ENCODE measurements at regions of chr1 and their contacts with region 1.

Region 1: GRCh38 chr1:7062346-7063061 is 277.2 kb downstream of the CAMTA1 start:
- DNase-seq: no peak
- H3K4me3 ChIP-seq: no peak overlapping the region
- H3K4me3 Mint-ChIP-seq: no peak overlapping the region
- H3K27ac Mint-ChIP-seq: no peak overlapping the region
- H3K4me1 ChIP-seq: no peaks in the 10 kb centered on the region
- H3K4me1 Mint-ChIP-seq: no peaks in the 10 kb centered on the region
- H3K27me3 ChIP-seq: no peaks in the 10 kb centered on the region; the same call in none of the 2 replicates
- H3K27me3 Mint-ChIP-seq: peaks cover 45% of the 10 kb centered on the region
- CTCF ChIP-seq: no peak

Region 2: DNA sequence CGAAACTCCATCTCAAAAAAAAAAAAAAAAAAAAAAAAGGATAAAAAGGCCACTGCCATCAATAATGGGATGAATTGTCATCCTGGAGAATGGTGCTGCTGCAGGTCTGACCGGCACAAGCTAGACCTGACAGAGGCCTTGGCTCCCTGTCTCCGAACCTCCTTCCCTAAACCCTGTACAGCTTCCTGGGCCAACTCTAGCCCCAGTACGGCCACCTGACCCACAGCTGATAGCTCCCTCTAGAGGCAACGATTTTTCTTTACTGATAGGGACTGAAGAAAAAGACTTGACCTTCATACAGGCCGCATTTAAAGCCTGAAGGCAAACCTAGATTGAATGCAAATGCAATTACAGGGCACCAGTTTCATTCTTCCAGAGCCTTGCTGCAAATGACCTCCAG is 538.9 kb before region 1 on chr1:
- CTCF ChIA-PET with region 1: no interaction called
- POLR2A ChIA-PET with region 1: no interaction called
- intact Hi-C with region 1: no loop called
- DNase-seq: peak in 1 of 2 experiments; percentile 56
- H3K4me3 ChIP-seq: no peak overlapping the region
- H3K4me3 Mint-ChIP-seq: no peak overlapping the region
- H3K27ac Mint-ChIP-seq: no peak overlapping the region
- H3K4me1 ChIP-seq: no peaks in the 10 kb centered on the region
- H3K4me1 Mint-ChIP-seq: no peaks in the 10 kb centered on the region
- H3K27me3 ChIP-seq: no peaks in the 10 kb centered on the region
- H3K27me3 Mint-ChIP-seq: no peaks in the 10 kb centered on the region
- CTCF ChIP-seq: peak in 1 of 2 experiments; percentile 39

Region 3: DNA sequence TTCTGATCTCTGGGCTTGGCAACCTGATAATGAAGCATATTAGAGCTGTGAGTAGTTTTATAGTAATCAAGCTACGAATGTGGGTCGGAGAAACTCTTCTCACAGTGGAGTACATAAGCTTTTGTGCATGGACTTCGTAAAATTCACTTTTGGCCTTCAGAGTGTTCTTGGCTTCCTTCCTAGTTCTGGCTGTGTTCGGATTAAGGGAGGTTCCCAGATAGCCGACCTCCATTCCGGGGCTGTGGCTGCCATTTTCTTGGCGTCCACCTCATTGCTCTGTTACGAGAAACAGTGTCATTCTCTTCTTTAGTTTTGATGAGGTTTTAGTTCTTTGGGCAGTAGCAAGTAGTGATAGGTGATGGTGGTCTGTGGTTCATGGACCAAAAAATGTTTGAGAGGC is 250.9 kb before region 1 on chr1:
- CTCF ChIA-PET with region 1: no interaction called
- POLR2A ChIA-PET with region 1: no interaction called
- intact Hi-C with region 1: no loop called
- DNase-seq: no peak
- H3K4me3 ChIP-seq: no peak overlapping the region
- H3K4me3 Mint-ChIP-seq: no peak overlapping the region
- H3K27ac Mint-ChIP-seq: no peak overlapping the region
- H3K4me1 ChIP-seq: peaks cover 10% of the 10 kb centered on the region; the same call in 1 of the 2 replicates
- H3K4me1 Mint-ChIP-seq: no peaks in the 10 kb centered on the region
- H3K27me3 ChIP-seq: no peaks in the 10 kb centered on the region
- H3K27me3 Mint-ChIP-seq: no peaks in the 10 kb centered on the region
- CTCF ChIP-seq: no peak

Region 4: DNA sequence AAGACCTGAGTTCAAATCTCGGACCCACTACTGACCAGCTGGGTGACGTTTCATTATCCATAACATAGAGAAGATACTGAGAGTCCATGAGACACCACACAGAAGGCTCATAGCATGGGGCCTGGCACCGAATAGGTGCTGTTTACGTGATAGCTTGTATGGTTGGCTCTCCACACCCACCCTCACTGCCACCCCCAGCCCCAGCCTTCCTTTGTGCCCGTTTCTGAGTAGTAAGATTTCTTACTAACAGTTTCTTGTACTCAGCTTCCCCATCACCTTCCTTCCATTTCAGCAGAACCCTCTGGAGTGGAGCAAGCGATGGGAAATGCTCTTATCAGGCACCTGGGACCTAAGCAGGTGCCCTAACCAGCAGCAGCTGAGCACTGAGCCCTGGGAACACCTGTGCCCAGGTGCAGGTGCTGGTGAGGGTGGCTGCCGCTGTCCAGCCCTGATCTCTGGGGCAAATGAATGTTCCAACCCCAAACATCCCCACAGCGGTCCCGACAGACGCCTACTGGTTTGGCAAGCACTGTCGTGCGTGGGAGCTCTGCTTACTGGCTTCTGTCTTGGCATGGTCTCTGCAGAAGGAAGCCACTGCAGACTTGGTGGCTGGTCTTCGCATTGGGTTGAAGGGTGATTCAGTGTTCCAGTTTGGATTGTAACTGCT is 51.8 kb before region 1 on chr1:
- CTCF ChIA-PET with region 1: no interaction called
- POLR2A ChIA-PET with region 1: no interaction called
- intact Hi-C with region 1: no loop called
- DNase-seq: no peak
- H3K4me3 ChIP-seq: no peak overlapping the region
- H3K4me3 Mint-ChIP-seq: no peak overlapping the region
- H3K27ac Mint-ChIP-seq: no peak overlapping the region
- H3K4me1 ChIP-seq: no peaks in the 10 kb centered on the region
- H3K4me1 Mint-ChIP-seq: no peaks in the 10 kb centered on the region
- H3K27me3 ChIP-seq: no peaks in the 10 kb centered on the region; the same call in 1 of the 2 replicates
- H3K27me3 Mint-ChIP-seq: peaks cover 44% of the 10 kb centered on the region
- CTCF ChIP-seq: no peak

Region 5: DNA sequence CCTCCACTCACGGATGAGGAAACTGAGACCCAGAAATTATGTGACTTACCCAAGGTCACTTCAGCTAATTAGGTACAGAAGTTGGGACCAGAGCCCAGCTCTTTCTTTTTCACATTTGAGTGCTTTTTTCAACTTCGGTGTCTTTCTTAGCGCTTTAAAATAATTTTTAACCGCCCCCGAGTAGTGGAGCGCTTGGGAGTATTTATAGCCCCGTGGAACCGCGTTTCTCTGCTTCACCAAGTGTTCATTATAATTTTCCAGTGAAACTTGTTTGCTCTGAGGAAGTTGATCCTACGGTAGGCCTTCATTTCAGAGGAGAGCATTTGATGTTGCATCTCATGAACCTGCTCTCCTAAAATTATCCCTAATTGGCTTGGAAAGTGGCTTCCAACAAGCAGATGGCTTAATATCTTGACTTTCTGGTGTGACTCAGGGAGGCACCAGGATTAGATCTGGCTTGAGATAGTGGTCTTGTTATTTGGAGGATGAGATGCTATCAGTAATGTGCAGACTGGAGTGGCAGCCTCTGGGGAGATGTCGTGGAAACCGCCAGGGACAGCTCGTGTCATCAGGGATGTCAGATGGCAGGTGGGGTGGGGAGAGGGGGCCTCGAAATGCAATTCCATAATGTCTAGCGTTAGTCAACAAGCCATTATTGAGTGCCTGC is 44.1 kb after region 1 on chr1:
- CTCF ChIA-PET with region 1: no interaction called
- POLR2A ChIA-PET with region 1: no interaction called
- intact Hi-C with region 1: loop called (anchors 2 kb)
- DNase-seq: no peak
- H3K4me3 ChIP-seq: no peak overlapping the region
- H3K4me3 Mint-ChIP-seq: no peak overlapping the region
- H3K27ac Mint-ChIP-seq: no peak overlapping the region
- H3K4me1 ChIP-seq: no peaks in the 10 kb centered on the region
- H3K4me1 Mint-ChIP-seq: no peaks in the 10 kb centered on the region
- H3K27me3 ChIP-seq: no peaks in the 10 kb centered on the region
- H3K27me3 Mint-ChIP-seq: peaks cover 17% of the 10 kb centered on the region
- CTCF ChIP-seq: no peak

Measured in Caco-2 (cell line).